A673 (cell line): ENCODE measurements at regions of chr11 and their contacts with region 1.

Region 1: DNA sequence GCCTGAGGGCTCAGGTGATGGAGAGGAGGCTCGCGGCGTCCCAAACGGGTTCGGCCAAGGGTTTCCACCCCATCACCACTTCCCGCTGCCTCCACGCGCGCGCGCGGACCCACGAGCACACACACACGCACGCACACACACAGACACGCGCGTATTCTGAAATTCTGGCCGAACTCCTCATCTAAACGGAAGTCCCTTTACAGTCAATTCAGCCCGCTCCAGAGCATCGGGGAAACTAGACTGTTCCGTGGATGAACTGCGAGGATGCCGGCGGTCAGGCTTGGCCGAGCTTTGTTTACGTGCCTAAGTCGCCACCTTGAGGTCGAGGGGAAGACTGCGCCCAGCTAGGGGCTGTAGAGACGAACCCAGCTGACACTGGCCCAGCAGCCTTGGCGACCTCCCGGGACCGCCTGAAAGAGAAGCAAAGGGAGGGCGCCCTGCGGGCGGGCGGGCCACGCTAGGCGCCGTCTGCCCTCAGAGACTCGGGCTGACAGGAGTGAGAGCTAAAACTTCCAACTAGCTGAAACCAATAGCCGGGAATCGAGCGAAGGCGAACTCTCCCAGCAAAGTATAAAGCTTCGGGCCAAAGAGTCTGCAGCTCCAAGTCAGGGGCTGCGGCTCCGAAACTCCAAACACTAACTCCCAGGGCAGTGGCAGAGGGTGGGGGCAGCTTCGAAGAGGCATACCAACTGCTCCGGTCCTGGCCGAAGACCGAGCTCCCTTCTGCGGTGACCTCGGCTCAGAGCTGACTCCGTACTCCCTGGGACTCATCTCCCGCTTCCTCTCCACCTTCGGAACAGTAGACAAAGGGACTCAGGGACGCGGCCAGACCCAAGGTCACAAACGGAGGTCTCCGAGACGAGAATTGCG is 124.7 kb upstream of the C11orf58 start:
- DNase-seq: peak; percentile 93
- H3K4me3 ChIP-seq: peak overlapping the region; percentile 61
- H3K27ac ChIP-seq: peak overlapping the region; percentile 70
- H3K4me1 ChIP-seq: peaks cover 18% of the 10 kb centered on the region
- H3K27me3 ChIP-seq: no peaks in the 10 kb centered on the region
- CTCF ChIP-seq: peak; percentile 90

Region 2: GRCh38 chr11:15276621-15277020 is 1337.1 kb before region 1 on chr11:
- CTCF ChIA-PET with region 1: no interaction called
- POLR2A ChIA-PET with region 1: no interaction called
- intact Hi-C with region 1: loop called (anchors 5 kb)
- DNase-seq: peak; percentile 76
- H3K4me3 ChIP-seq: no peak overlapping the region
- H3K27ac ChIP-seq: peak overlapping the region; percentile 7
- H3K4me1 ChIP-seq: peaks cover 20% of the 10 kb centered on the region
- H3K27me3 ChIP-seq: no peaks in the 10 kb centered on the region
- CTCF ChIP-seq: peak; percentile 63

Region 3: GRCh38 chr11:15327786-15328231 is 1285.9 kb before region 1 on chr11:
- CTCF ChIA-PET with region 1: no interaction called
- POLR2A ChIA-PET with region 1: interaction called, 5 read pairs
- intact Hi-C with region 1: loop called (anchors 1 kb)
- DNase-seq: peak; percentile 77
- H3K4me3 ChIP-seq: no peak overlapping the region
- H3K27ac ChIP-seq: no peak overlapping the region
- H3K4me1 ChIP-seq: peaks cover 7% of the 10 kb centered on the region
- H3K27me3 ChIP-seq: no peaks in the 10 kb centered on the region
- CTCF ChIP-seq: peak; percentile 75

Region 4: GRCh38 chr11:15650105-15650938 is 963.4 kb before region 1 on chr11:
- CTCF ChIA-PET with region 1: interaction called, 4 read pairs
- POLR2A ChIA-PET with region 1: no interaction called
- intact Hi-C with region 1: loop called (anchors 2 kb)
- DNase-seq: peak; percentile 92
- H3K4me3 ChIP-seq: peak overlapping the region; percentile 45
- H3K27ac ChIP-seq: peak overlapping the region; percentile 75
- H3K4me1 ChIP-seq: peaks cover 7% of the 10 kb centered on the region
- H3K27me3 ChIP-seq: no peaks in the 10 kb centered on the region
- CTCF ChIP-seq: peak; percentile 93

Region 5: GRCh38 chr11:15770798-15771414 is 842.8 kb before region 1 on chr11:
- CTCF ChIA-PET with region 1: interaction called, 3 read pairs
- POLR2A ChIA-PET with region 1: no interaction called
- intact Hi-C with region 1: loop called (anchors 2 kb)
- DNase-seq: peak; percentile 74
- H3K4me3 ChIP-seq: no peak overlapping the region
- H3K27ac ChIP-seq: no peak overlapping the region
- H3K4me1 ChIP-seq: peaks cover 4% of the 10 kb centered on the region
- H3K27me3 ChIP-seq: no peaks in the 10 kb centered on the region
- CTCF ChIP-seq: peak; percentile 78

Region 6: GRCh38 chr11:15826826-15827225 is 786.9 kb before region 1 on chr11:
- CTCF ChIA-PET with region 1: interaction called, 3 read pairs
- POLR2A ChIA-PET with region 1: no interaction called
- intact Hi-C with region 1: loop called (anchors 2 kb)
- DNase-seq: peak; percentile 83
- H3K4me3 ChIP-seq: no peak overlapping the region
- H3K27ac ChIP-seq: no peak overlapping the region
- H3K4me1 ChIP-seq: peaks cover 20% of the 10 kb centered on the region
- H3K27me3 ChIP-seq: no peaks in the 10 kb centered on the region
- CTCF ChIP-seq: peak; percentile 91

Region 7: GRCh38 chr11:16022861-16023260 is 590.9 kb before region 1 on chr11:
- CTCF ChIA-PET with region 1: interaction called, 4 read pairs
- POLR2A ChIA-PET with region 1: no interaction called
- intact Hi-C with region 1: loop called (anchors 5 kb)
- DNase-seq: peak; percentile 31
- H3K4me3 ChIP-seq: no peak overlapping the region
- H3K27ac ChIP-seq: peak overlapping the region; percentile 84
- H3K4me1 ChIP-seq: peaks cover 63% of the 10 kb centered on the region
- H3K27me3 ChIP-seq: no peaks in the 10 kb centered on the region
- CTCF ChIP-seq: no peak

Region 8: GRCh38 chr11:16347928-16348685 is 265.6 kb before region 1 on chr11:
- CTCF ChIA-PET with region 1: no interaction called
- POLR2A ChIA-PET with region 1: no interaction called
- intact Hi-C with region 1: no loop called
- DNase-seq: peak; percentile 49
- H3K4me3 ChIP-seq: no peak overlapping the region
- H3K27ac ChIP-seq: peak overlapping the region; percentile 80
- H3K4me1 ChIP-seq: peaks cover 78% of the 10 kb centered on the region
- H3K27me3 ChIP-seq: no peaks in the 10 kb centered on the region
- CTCF ChIP-seq: no peak